ENCODE measurements at regions of chr16 and their contacts with region 1.

Region 1: GRCh38 chr16:3059000-3059722 is 6.3 kb upstream of the IL32 start:
- DNase-seq: peak; percentile 71 to 98
- H3K4me3 ChIP-seq: peak overlapping the region; percentile 88
- H3K27ac ChIP-seq: no peak overlapping the region
- H3K4me1 ChIP-seq: peaks cover 10% of the 10 kb centered on the region; the same call in 1 of the 2 replicates
- H3K27me3 ChIP-seq: no peaks in the 10 kb centered on the region
- CTCF ChIP-seq: peak; percentile 85

Region 2: GRCh38 chr16:2614761-2615191 is 444.4 kb before region 1 on chr16:
- CTCF ChIA-PET with region 1: no interaction called
- POLR2A ChIA-PET with region 1: no interaction called
- intact Hi-C with region 1: no loop called
- DNase-seq: no peak
- H3K4me3 ChIP-seq: no peak overlapping the region
- H3K27ac ChIP-seq: no peak overlapping the region
- H3K4me1 ChIP-seq: no peaks in the 10 kb centered on the region
- H3K27me3 ChIP-seq: no peaks in the 10 kb centered on the region
- CTCF ChIP-seq: no peak

Region 3: DNA sequence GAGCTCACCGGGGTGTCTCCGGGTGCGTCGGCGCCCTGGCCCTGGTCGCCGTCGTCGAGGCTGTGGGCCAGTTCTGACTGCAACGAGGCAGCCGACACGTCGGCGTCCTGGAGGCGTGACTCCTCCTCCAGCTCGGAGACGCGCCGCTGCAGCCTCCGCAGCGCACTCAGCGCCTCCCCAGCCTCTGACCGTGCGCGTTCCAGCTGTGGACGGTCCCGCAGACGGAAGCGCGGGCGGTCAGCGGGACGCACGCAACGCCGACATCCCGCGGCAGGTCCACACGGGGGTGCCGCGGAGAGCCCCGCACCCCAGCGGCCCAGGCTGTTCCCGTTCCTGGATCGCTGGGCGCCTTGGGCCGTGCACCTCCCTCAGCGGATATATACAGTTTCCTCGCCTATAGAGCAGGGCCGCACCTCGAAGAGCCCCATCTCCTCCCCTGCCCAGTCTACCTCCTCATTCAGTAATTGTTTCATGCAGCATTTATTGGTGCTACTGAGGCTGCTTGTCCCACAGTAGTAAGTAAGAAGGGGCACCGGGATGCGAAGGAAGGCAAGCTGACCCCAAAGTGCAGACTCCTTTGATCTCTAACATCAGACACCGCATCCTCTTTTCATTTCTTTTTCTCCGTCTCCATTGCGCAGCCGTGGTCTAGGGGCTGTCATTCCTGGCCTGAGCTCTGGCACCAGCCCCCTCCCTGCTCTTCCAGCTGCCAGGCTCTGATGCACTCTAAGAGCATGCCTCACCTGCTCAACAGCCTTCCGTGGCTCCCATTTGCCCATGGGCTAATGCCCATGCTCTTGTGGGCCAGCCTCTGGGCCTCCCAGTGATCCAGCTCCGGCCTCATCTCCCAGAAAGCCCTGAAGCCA is 29.4 kb before region 1 on chr16:
- CTCF ChIA-PET with region 1: interaction called, 13 read pairs
- POLR2A ChIA-PET with region 1: interaction called, 7 read pairs
- intact Hi-C with region 1: loop called (anchors 1 kb)
- DNase-seq: no peak
- H3K4me3 ChIP-seq: no peak overlapping the region
- H3K27ac ChIP-seq: no peak overlapping the region
- H3K4me1 ChIP-seq: peaks cover 30% of the 10 kb centered on the region
- H3K27me3 ChIP-seq: no peaks in the 10 kb centered on the region
- CTCF ChIP-seq: no peak

Region 4: DNA sequence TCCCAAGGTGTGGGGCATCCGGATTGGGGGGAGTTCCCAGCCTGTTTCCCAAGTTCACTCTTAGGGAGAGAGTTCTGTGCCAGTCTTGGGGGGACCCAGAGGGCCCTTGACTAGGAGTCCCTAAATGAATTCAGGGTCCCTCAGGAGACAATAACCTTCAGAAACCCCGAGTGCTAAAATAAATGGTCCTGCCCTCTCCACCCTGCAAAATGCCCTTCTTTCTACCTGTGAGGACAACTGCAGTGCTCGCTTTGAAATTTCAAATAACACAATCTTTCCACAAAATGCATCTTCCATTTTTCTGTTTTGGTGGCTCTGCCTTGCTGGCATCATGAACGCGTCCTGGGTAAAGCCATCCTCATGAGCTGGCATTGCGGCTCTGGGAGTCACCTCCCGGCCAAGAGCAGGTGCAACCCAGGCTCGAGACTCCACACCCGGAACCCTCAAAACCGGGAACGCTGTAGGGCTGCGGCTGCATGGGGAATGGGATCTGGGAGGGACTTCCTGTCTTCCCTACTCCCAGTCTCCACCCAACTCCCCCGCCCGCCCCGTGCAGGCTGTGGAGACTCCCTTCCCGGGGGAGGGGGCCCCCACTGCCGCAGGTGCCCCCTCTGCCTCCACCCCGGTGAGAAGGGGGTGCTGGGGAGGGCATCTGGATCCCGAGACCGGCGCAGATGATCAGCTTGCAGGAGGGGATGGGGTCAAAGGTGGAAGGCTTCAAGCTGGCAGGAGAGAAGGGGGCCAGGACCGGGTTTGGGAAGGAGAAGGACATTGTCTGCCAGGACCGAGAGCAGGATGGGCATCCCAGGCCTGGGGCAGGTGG is 53.1 kb after region 1 on chr16 and contains the start of gene ZNF205:
- CTCF ChIA-PET with region 1: interaction called, 3 read pairs
- POLR2A ChIA-PET with region 1: no interaction called
- intact Hi-C with region 1: loop called (anchors 1 kb)
- DNase-seq: peak; percentile 79 to 87
- H3K4me3 ChIP-seq: peak within 1 kb of the TSS; percentile 72
- H3K27ac ChIP-seq: no peak within 1 kb of the TSS
- H3K4me1 ChIP-seq: peaks cover 16% of the 10 kb centered on the region
- H3K27me3 ChIP-seq: no peaks in the 10 kb centered on the region
- CTCF ChIP-seq: no peak
- total RNA-seq, gene ZNF205: 17.4 and 18.0 TPM in 2 replicates

Region 5: DNA sequence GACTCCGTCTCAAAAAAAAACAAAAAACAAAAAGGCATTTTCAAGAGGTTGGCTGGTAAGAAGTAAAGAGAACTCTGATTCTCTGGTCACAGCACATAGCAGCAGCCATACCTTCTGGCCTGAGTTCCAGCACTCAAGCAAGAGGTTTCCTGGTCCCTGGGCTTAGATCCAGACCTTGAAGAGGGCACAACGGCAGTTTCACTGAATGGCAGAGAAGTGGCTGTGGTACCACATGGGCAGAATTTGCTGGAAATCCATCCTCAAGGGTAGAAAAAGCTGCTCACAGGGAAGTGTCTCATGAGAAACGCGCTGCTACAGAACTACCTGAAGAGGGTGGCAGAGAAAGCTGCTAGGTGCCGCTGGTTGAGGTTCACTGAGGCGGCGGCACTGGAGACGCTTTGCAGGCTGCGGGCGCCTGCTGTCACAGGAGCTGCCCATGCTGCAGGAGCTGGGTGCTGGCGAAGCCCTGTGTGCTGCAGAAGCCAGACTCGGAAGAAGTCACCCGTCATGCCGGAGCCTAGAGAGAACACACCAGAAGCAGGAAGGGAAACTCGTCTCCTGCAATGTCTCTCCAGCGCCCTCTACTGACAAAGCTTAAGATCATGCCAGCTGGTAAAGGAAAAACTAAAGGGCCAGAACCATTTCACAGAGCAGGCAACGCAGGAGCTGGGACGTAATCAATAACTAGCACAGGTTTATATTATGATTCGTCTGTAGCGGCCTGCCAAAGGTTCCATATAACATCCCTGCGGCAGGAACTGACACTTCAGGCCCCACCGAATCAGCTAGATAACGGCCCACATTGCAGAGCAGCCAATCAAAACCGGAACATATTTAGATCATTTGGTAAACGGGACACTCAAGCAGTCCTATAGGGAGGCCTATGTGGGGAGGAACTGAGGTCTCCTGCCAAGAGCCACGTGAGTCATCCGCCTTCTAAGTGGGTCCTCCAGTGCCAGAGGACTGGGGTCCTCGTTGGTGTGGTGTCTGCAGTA is 70.3 kb after region 1 on chr16:
- CTCF ChIA-PET with region 1: interaction called, 11 read pairs
- POLR2A ChIA-PET with region 1: interaction called, 3 read pairs
- intact Hi-C with region 1: loop called (anchors 1 kb)
- DNase-seq: peak; percentile 55 to 71
- H3K4me3 ChIP-seq: no peak overlapping the region
- H3K27ac ChIP-seq: no peak overlapping the region
- H3K4me1 ChIP-seq: peaks cover 5% of the 10 kb centered on the region; the same call in 1 of the 2 replicates
- H3K27me3 ChIP-seq: no peaks in the 10 kb centered on the region
- CTCF ChIP-seq: peak; percentile 87